Left ventricle myocardium superior (tissue), 1 donor: ENCODE measurements at regions of chr10 and their contacts with region 1.

Region 1: GRCh38 chr10:89347706-89348457 is 20.1 kb downstream of the IFIT3 start:
- DNase-seq: no peak
- ATAC-seq: peak; percentile 24

Region 2: DNA sequence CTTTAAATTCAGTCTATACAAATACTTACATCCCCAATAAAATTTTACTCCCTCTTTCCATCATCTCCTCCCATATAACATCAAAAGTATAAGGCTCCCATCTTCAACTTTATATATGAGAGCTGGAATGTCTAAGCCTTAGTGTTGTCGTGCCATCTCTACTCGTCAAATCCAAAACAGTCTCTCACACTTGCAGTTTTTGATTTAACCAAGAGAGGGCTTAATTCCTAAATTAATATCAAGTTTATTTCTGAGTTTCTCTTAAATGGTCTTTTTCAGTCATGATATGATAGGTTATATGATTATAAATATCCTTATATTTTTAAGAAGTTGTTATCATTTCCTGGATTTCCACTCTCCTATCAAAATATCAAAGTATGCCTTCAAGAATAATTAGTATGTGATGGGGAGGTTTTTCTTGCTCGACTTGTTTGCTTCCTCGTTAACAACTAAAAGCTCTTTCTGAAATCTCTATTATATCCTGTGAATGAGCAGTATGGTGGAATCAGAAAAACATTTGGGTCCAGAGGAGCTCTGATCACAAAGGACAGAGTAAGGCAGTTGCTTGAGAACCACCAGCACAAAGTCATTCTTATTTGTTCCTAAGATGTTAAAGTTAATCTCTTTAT is 654.4 kb before region 1 on chr10:
- intact Hi-C with region 1: no loop called
- DNase-seq: no peak
- ATAC-seq: no peak

Region 3: DNA sequence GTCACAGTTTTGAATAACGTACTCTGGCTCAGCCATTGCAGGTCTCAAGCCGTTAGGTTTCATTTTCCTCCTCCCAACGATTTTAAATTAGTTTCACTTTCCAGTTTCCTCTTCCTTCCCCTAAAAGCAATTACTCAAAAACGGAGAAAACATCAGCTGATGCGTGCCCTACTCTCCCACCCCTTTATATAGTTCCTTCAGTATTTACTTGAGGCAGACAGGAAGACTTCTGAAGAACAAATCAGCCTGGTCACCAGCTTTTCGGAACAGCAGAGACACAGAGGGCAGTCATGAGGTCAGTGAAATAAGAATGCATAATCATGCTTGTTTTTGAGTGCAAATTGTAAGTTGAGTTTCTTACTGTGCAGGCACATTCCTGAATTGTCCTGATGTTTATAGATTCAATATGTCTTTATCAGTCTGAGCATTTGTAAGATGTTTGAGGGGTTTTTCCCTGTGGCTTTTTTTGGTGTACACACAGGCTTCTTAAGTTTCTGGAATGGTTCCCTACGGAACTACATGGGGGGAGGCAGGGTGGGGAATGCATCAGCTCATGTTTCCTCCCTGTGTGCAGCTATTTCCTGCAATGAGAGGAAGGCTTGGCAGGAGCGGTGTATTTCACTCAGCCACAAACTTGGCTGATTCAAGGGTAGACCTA is 20.0 kb before region 1 on chr10 and contains the start of gene IFIT3:
- intact Hi-C with region 1: loop called (anchors 2 kb)
- DNase-seq: peak; percentile 47
- ATAC-seq: peak; percentile 93
- total RNA-seq, gene IFIT3: 8.8 TPM